BJ (cell line): ENCODE measurements at regions of chr1 and their contacts with region 1.

Region 1: GRCh38 chr1:23163395-23163794 is 5.3 kb downstream of the LUZP1 start:
- DNase-seq: no peak
- H3K4me3 ChIP-seq: no peak overlapping the region
- H3K27me3 ChIP-seq: no peaks in the 10 kb centered on the region
- CTCF ChIP-seq: no peak

Region 2: GRCh38 chr1:23114424-23115079 is 48.8 kb before region 1 on chr1:
- CTCF ChIA-PET with region 1: no interaction called
- POLR2A ChIA-PET with region 1: interaction called, 15 read pairs
- DNase-seq: no peak
- H3K4me3 ChIP-seq: no peak overlapping the region
- H3K27me3 ChIP-seq: no peaks in the 10 kb centered on the region
- CTCF ChIP-seq: no peak